Naive thymus-derived CD8-positive, alpha-beta T cell (primary cell): ENCODE measurements at regions of chr9 and their contacts with region 1.

Region 1: GRCh38 chr9:78213712-78214111 is 22.2 kb upstream of the CEP78 start:
- DNase-seq: peak in 3 of 10 donors; percentile 40 to 50 (median 43)
- ATAC-seq: peak; percentile 52 to 72
- H3K4me3 Mint-ChIP-seq: peak overlapping the region in 5 of 10 donors; percentile 6 to 62 (median 18)
- H3K27ac Mint-ChIP-seq: peak overlapping the region in 5 of 10 donors; percentile 23 to 77 (median 37)
- H3K4me1 Mint-ChIP-seq: peaks cover 27 to 52% (median 42%) of the 10 kb centered on the region in 4 donors
- H3K27me3 Mint-ChIP-seq: no peaks in the 10 kb centered on the region

Region 2: DNA sequence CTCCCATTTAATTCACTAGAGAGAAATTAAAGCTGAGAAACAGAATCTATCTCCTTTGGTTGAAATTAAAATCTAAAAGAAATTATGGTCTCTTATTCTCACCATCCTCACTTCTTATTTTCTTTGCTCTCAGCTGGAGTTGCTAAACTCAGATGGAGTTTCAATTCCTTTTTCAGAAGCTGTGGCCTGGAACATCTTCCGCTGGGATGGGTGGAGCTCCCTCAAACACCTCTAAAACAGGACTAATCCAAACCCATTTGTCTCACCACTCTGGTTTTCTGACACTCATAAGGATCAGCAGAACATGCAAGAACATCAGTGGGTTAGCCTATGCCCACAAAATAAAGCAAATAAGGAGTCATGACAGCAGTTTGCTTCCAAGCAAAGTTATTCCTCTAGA is 17.5 kb before region 1 on chr9:
- POLR2A ChIA-PET with region 1: interaction called, 28 read pairs
- DNase-seq: no peak
- ATAC-seq: no peak
- H3K4me3 Mint-ChIP-seq: peak overlapping the region in 1 of 10 donors; percentile 25
- H3K27ac Mint-ChIP-seq: peak overlapping the region in 2 of 10 donors; percentile 44 to 52
- H3K4me1 Mint-ChIP-seq: peaks cover 17 to 37% (median 23%) of the 10 kb centered on the region in 4 donors
- H3K27me3 Mint-ChIP-seq: no peaks in the 10 kb centered on the region